T-cell (primary cell): ENCODE measurements at regions of chr1 and their contacts with region 1.

Region 1: GRCh38 chr1:235105051-235106043 is 23.3 kb downstream of the TOMM20 start:
- DNase-seq: peak in 2 of 35 experiments; percentile 14 to 58
- ATAC-seq: peak in 2 of 4 experiments; percentile 19 to 23
- H3K4me3 ChIP-seq: peak overlapping the region in 1 of 2 donors; percentile 16
- H3K4me3 Mint-ChIP-seq: peak overlapping the region; percentile 71 to 82 (median 77)
- H3K27ac ChIP-seq: peak overlapping the region; percentile 49
- H3K27ac Mint-ChIP-seq: peak overlapping the region; percentile 47 to 76
- H3K4me1 ChIP-seq: peaks cover 19 to 33% of the 10 kb centered on the region in 2 experiments
- H3K4me1 Mint-ChIP-seq: peaks cover 33 to 40% (median 37%) of the 10 kb centered on the region in 3 donors
- H3K27me3 ChIP-seq: no peaks in the 10 kb centered on the region
- H3K27me3 Mint-ChIP-seq: peaks cover 0 to 4% of the 10 kb centered on the region in 2 donors

Region 2: GRCh38 chr1:234583755-234584419 is 521.5 kb before region 1 on chr1:
- CTCF ChIA-PET with region 1: interaction called in 1 of 2 experiments, 13 read pairs
- POLR2A ChIA-PET with region 1: no interaction called
- DNase-seq: no peak
- ATAC-seq: no peak
- H3K4me3 ChIP-seq: no peak overlapping the region
- H3K4me3 Mint-ChIP-seq: no peak overlapping the region
- H3K27ac ChIP-seq: no peak overlapping the region
- H3K27ac Mint-ChIP-seq: no peak overlapping the region
- H3K4me1 ChIP-seq: no peaks in the 10 kb centered on the region
- H3K4me1 Mint-ChIP-seq: no peaks in the 10 kb centered on the region
- H3K27me3 ChIP-seq: no peaks in the 10 kb centered on the region
- H3K27me3 Mint-ChIP-seq: peaks cover 0 to 8% of the 10 kb centered on the region in 2 donors

Region 3: GRCh38 chr1:235050911-235051360 is 54.4 kb before region 1 on chr1:
- CTCF ChIA-PET with region 1: no interaction called
- POLR2A ChIA-PET with region 1: no interaction called
- DNase-seq: no peak
- ATAC-seq: no peak
- H3K4me3 ChIP-seq: no peak overlapping the region
- H3K4me3 Mint-ChIP-seq: no peak overlapping the region
- H3K27ac ChIP-seq: no peak overlapping the region
- H3K27ac Mint-ChIP-seq: no peak overlapping the region
- H3K4me1 ChIP-seq: peaks cover 0 to 8% of the 10 kb centered on the region in 2 experiments
- H3K4me1 Mint-ChIP-seq: peaks cover 0 to 15% (median 6%) of the 10 kb centered on the region in 3 donors
- H3K27me3 ChIP-seq: no peaks in the 10 kb centered on the region
- H3K27me3 Mint-ChIP-seq: no peaks in the 10 kb centered on the region

Region 4: DNA sequence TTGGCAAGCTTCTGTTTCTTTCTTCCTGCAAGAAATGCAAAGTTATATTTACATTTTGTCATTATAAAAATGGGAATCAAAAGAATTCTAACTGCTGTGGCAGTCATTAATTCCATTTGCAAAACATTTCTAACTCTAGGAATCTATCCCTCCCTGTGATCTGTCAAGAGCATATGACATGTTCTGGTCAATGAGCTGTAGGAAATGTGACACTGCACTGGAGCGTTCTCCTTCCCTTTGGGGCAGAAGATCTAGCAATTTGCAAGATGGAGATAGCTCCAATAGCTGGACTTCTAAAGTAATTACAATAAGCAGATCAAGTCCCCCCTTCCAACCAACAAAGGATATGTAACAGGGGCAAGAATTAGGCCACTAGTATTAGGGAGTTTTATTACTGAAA is 17.0 kb after region 1 on chr1:
- CTCF ChIA-PET with region 1: interaction called, 9 to 12 read pairs
- POLR2A ChIA-PET with region 1: no interaction called
- DNase-seq: no peak
- ATAC-seq: no peak
- H3K4me3 ChIP-seq: no peak overlapping the region
- H3K4me3 Mint-ChIP-seq: peak overlapping the region in 2 of 3 donors; percentile 56 to 58
- H3K27ac ChIP-seq: no peak overlapping the region
- H3K27ac Mint-ChIP-seq: peak overlapping the region in 1 of 2 donors; percentile 73
- H3K4me1 ChIP-seq: peaks cover 6 to 31% of the 10 kb centered on the region in 2 experiments
- H3K4me1 Mint-ChIP-seq: peaks cover 55 to 62% (median 61%) of the 10 kb centered on the region in 3 donors
- H3K27me3 ChIP-seq: no peaks in the 10 kb centered on the region
- H3K27me3 Mint-ChIP-seq: no peaks in the 10 kb centered on the region

Region 5: DNA sequence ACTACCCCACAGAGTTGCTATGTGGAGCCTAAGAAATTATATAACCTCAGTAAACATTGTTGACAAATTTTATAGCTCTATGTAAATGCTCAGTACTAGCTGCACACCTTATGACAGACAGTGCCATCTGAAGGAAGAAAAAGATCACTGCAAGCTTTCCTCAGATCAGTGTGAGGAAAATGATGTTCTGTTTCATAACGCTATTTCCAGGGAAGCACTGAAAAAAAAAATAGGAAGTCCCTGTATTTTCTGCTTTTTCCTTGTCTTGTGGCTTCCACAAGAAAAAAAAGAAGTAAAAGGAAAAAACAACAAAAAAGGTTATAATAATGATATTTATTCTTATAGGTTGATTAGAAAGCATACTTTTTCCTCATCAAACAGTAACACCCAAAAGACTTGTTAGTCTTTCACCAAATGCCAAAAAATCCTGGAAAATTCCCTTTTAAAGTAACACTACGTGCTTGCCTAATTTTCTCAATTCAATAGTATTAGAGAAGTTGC is 738.2 kb after region 1 on chr1:
- CTCF ChIA-PET with region 1: no interaction called
- POLR2A ChIA-PET with region 1: interaction called in 1 of 2 experiments, 10 read pairs
- DNase-seq: peak in 1 of 35 experiments; percentile 54
- ATAC-seq: peak in 3 of 4 experiments; percentile 48 to 84 (median 54)
- H3K4me3 ChIP-seq: no peak overlapping the region
- H3K4me3 Mint-ChIP-seq: no peak overlapping the region
- H3K27ac ChIP-seq: no peak overlapping the region
- H3K27ac Mint-ChIP-seq: no peak overlapping the region
- H3K4me1 ChIP-seq: peaks cover 10 to 17% of the 10 kb centered on the region in 2 experiments
- H3K4me1 Mint-ChIP-seq: peaks cover 50 to 69% (median 59%) of the 10 kb centered on the region in 3 donors
- H3K27me3 ChIP-seq: no peaks in the 10 kb centered on the region
- H3K27me3 Mint-ChIP-seq: no peaks in the 10 kb centered on the region